ENCODE measurements at regions of chrX and their contacts with region 1.

Region 1: GRCh38 chrX:39470588-39471407 is 627.0 kb downstream of the BCOR start:
- DNase-seq: peak; percentile 90
- H3K4me3 ChIP-seq: no peak overlapping the region
- H3K27ac ChIP-seq: peak overlapping the region; percentile 53 to 79 (median 76)
- H3K4me1 ChIP-seq: peaks cover 0 to 29% (median 8%) of the 10 kb centered on the region in 4 donors
- H3K27me3 ChIP-seq: no peaks in the 10 kb centered on the region
- CTCF ChIP-seq: no peak
- EP300 ChIP-seq: peak in 1 of 4 donors; percentile 5
- POLR2A ChIP-seq: no peak

Region 2: GRCh38 chrX:39275500-39276068 is 195.2 kb before region 1 on chrX:
- intact Hi-C with region 1: no loop called
- DNase-seq: no peak
- H3K4me3 ChIP-seq: no peak overlapping the region
- H3K27ac ChIP-seq: no peak overlapping the region
- H3K4me1 ChIP-seq: no peaks in the 10 kb centered on the region
- H3K27me3 ChIP-seq: no peaks in the 10 kb centered on the region
- CTCF ChIP-seq: no peak
- EP300 ChIP-seq: no peak
- POLR2A ChIP-seq: no peak

Region 3: DNA sequence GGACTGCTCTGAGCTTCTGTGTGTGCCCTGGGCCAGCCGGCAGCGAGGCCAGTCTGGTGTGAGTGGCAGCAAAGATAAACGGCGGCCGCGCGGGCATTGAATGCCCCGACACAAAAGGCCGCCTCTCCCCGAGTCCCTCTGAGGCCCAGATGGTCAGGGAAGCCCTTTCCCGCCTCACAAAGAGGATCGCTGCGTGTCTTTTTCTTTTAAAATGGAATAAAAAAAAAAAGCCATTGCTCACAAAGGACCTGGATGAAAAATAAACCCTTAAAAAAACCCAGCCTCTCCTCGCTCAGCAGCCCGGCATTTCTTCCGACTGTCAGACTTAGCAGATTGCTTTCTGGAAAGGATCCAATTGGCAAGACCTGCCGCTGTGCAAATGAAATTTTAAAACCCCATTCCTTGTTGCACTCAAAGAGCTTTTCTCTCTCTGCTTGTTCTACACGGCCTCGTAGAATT is 48.3 kb after region 1 on chrX:
- intact Hi-C with region 1: loop called (anchors 5 kb)
- DNase-seq: no peak
- H3K4me3 ChIP-seq: peak overlapping the region in 3 of 4 donors; percentile 5 to 32 (median 19)
- H3K27ac ChIP-seq: peak overlapping the region; percentile 35 to 63 (median 55)
- H3K4me1 ChIP-seq: peaks cover 0 to 15% (median 5%) of the 10 kb centered on the region in 4 donors
- H3K27me3 ChIP-seq: no peaks in the 10 kb centered on the region
- CTCF ChIP-seq: no peak
- EP300 ChIP-seq: no peak
- POLR2A ChIP-seq: no peak

Region 4: GRCh38 chrX:40175511-40176350 is 704.9 kb after region 1 on chrX:
- intact Hi-C with region 1: loop called (anchors 5 kb)
- DNase-seq: peak; percentile 89
- H3K4me3 ChIP-seq: peak overlapping the region; percentile 38 to 63 (median 56)
- H3K27ac ChIP-seq: peak overlapping the region; percentile 91 to 97 (median 93)
- H3K4me1 ChIP-seq: peaks cover 0 to 46% (median 26%) of the 10 kb centered on the region in 4 donors
- H3K27me3 ChIP-seq: peaks cover 0 to 5% (median 0%) of the 10 kb centered on the region in 3 donors
- CTCF ChIP-seq: no peak
- EP300 ChIP-seq: no peak
- POLR2A ChIP-seq: no peak

Measured in sigmoid colon (tissue), 7 donors.